ENCODE measurements at regions of chr10 and their contacts with region 1.

Region 1: DNA sequence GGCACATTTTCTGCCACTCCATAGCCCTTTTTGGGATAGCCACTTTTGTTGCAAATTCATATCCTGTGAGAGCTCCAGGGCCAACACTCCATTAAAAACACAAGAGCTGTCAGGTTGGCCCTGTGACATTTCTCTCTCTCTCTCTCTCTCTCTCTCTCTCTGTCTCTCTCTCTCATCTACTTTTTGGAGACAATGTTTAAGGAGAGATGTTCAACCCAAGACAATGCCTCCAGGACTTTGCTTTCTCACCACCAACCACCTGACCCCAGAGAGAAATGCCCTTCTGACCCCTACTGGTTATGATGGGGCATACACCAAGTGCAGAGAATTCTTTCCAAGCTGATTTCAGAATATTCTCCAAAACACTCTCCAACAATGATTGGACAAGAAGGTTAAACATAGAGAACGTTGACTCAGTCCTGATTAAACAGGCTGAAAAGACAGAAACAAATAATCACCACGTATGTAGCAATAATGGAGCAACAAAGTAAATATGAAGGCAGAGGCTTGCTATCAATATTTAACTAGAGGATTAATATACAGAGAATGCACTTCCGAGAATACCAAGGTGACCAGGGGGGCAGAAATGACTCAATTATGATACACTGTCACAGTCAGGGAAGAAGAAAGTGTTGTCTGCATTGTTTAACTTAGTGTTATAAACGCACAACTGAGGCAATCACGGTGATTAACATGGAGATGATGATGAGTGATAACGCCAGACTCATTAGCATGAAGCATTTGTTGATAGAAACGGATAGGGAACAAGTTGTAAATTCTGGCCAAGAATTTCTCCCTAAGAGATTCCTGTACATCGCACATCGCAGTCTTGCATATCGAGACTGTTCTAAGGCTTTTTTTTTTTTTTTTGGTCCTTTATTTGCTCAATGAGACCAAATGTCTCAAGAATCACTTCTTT is 178.5 kb downstream of the NRP1 start:
- DNase-seq: peak; percentile 81
- H3K4me3 Mint-ChIP-seq: no peak overlapping the region
- H3K27ac Mint-ChIP-seq: no peak overlapping the region
- H3K4me1 Mint-ChIP-seq: peaks cover 25% of the 10 kb centered on the region
- H3K27me3 Mint-ChIP-seq: no peaks in the 10 kb centered on the region

Region 2: DNA sequence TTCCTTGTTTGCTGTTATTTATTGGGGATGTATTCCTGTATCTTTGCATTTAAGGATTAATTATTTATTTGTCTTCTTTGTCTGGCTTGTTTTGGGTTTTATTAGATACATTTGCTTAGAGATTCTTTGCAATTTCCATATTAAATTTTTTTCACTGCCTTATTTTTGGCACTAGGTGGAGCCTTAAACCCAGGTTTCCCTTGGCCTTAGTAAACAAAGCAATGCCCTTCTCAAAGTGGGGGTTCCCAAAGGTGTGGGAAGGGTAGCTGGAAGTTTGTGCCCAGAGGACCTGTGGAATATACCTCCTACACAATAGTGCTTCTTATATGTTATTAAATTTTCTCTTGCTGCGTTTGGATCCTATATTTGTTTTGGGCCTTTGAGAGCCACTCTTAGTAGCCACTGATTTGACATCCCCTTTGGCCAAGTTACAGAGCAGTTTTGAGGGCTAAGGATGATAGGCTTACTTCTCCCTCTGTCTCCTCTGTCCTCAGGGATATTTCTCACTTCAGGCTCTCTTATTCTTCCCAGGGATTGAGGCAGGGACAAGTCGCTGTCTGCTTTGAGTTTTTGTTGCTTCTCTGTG is 360.3 kb before region 1 on chr10:
- intact Hi-C with region 1: loop called (anchors 1 kb)
- DNase-seq: peak; percentile 67
- H3K4me3 Mint-ChIP-seq: no peak overlapping the region
- H3K27ac Mint-ChIP-seq: no peak overlapping the region
- H3K4me1 Mint-ChIP-seq: no peaks in the 10 kb centered on the region
- H3K27me3 Mint-ChIP-seq: peaks cover 5% of the 10 kb centered on the region

Region 3: GRCh38 chr10:33008499-33009243 is 147.3 kb before region 1 on chr10:
- intact Hi-C with region 1: loop called (anchors 1 kb)
- DNase-seq: peak; percentile 88
- H3K4me3 Mint-ChIP-seq: peak overlapping the region; percentile 79
- H3K27ac Mint-ChIP-seq: peak overlapping the region; percentile 45
- H3K4me1 Mint-ChIP-seq: peaks cover 19% of the 10 kb centered on the region
- H3K27me3 Mint-ChIP-seq: peaks cover 11% of the 10 kb centered on the region

Region 4: GRCh38 chr10:33025039-33025438 is 130.9 kb before region 1 on chr10:
- intact Hi-C with region 1: loop called (anchors 5 kb)
- DNase-seq: no peak
- H3K4me3 Mint-ChIP-seq: no peak overlapping the region
- H3K27ac Mint-ChIP-seq: no peak overlapping the region
- H3K4me1 Mint-ChIP-seq: peaks cover 8% of the 10 kb centered on the region
- H3K27me3 Mint-ChIP-seq: peaks cover 12% of the 10 kb centered on the region

Region 5: GRCh38 chr10:33073641-33074415 is 82.2 kb before region 1 on chr10:
- intact Hi-C with region 1: loop called (anchors 5 kb)
- DNase-seq: no peak
- H3K4me3 Mint-ChIP-seq: no peak overlapping the region
- H3K27ac Mint-ChIP-seq: no peak overlapping the region
- H3K4me1 Mint-ChIP-seq: no peaks in the 10 kb centered on the region
- H3K27me3 Mint-ChIP-seq: peaks cover 2% of the 10 kb centered on the region

Region 6: GRCh38 chr10:33115738-33116719 is 40.0 kb before region 1 on chr10:
- intact Hi-C with region 1: loop called (anchors 2 kb)
- DNase-seq: no peak
- H3K4me3 Mint-ChIP-seq: no peak overlapping the region
- H3K27ac Mint-ChIP-seq: peak overlapping the region; percentile 32
- H3K4me1 Mint-ChIP-seq: peaks cover 45% of the 10 kb centered on the region
- H3K27me3 Mint-ChIP-seq: no peaks in the 10 kb centered on the region

Measured in activated CD4-positive, alpha-beta T cell treated with anti-CD3 and anti-CD28 coated beads, Interleukin-2, amount 10 ng/mL, durations not matched to agents 24 days and 14 days (primary cell).